ENCODE measurements at regions of chr1 and their contacts with region 1.

Region 1: GRCh38 chr1:203944651-203945404 is 83.4 kb downstream of the SNRPE start:
- DNase-seq: no peak
- H3K4me3 ChIP-seq: no peak overlapping the region
- H3K27ac ChIP-seq: no peak overlapping the region
- H3K4me1 ChIP-seq: peaks cover 19% of the 10 kb centered on the region
- CTCF ChIP-seq: no peak

Region 2: GRCh38 chr1:203954788-203955566 is 10.1 kb after region 1 on chr1:
- CTCF ChIA-PET with region 1: no interaction called
- POLR2A ChIA-PET with region 1: interaction called, 15 read pairs
- intact Hi-C with region 1: no loop called
- DNase-seq: peak; percentile 78
- H3K4me3 ChIP-seq: no peak overlapping the region
- H3K27ac ChIP-seq: peak overlapping the region; percentile 65
- H3K4me1 ChIP-seq: peaks cover 15% of the 10 kb centered on the region
- CTCF ChIP-seq: no peak

Measured in OCI-LY7 (cell line).